Naive thymus-derived CD4-positive, alpha-beta T cell (primary cell): ENCODE measurements at regions of chr10 and their contacts with region 1.

Region 1: DNA sequence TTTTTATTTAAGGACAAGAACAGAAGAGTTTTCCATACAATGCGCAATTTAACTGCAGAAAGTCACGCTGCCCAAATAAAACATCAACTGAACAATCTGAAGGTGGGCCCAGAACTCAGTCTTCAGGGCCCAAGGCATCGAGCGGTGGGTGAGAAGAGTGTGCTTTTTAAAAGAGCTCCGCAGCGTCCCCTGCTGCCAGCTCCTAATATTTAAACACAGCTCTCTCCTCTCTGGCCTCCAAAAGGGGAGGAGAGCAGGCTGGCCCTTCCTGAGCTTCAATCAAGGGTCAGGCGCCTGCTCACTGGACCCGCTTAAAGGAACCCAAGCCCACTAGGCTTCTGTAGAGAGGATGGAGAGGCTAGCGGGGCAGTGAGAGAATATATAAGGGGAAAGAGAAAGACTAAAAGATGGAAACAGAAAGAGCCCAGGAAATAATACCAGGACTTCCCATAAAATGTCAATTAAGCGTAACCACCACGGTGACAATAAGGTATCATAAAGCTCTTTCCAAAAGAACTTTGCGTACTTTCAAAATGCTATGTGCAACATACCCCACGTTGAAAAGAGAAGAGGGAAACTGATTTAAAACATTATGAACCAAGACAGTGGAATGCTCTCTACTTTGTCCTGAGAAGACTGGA is 2.8 kb downstream of the FAM53B start:
- DNase-seq: peak in 8 of 9 donors; percentile 62 to 80 (median 76)
- ATAC-seq: peak; percentile 68
- H3K4me3 ChIP-seq: peak overlapping the region; percentile 61
- H3K4me3 Mint-ChIP-seq: peak overlapping the region; percentile 83 to 98 (median 96)
- H3K27ac ChIP-seq: peak overlapping the region; percentile 57
- H3K27ac Mint-ChIP-seq: peak overlapping the region; percentile 81 to 92 (median 87)
- H3K4me1 ChIP-seq: peaks cover 63 to 68% of the 10 kb centered on the region in 2 donors
- H3K4me1 Mint-ChIP-seq: peaks cover 40 to 78% (median 73%) of the 10 kb centered on the region in 7 donors
- H3K27me3 ChIP-seq: no peaks in the 10 kb centered on the region
- H3K27me3 Mint-ChIP-seq: peaks cover 0 to 27% (median 0%) of the 10 kb centered on the region in 5 donors

Region 2: GRCh38 chr10:124403548-124403947 is 337.9 kb before region 1 on chr10:
- CTCF ChIA-PET with region 1: interaction called, 4 read pairs
- POLR2A ChIA-PET with region 1: no interaction called
- intact Hi-C with region 1: loop called in 1 of 2 experiments (anchors 5 kb)
- DNase-seq: peak in 7 of 9 donors; percentile 49 to 74 (median 67)
- ATAC-seq: peak; percentile 100
- H3K4me3 ChIP-seq: no peak overlapping the region
- H3K4me3 Mint-ChIP-seq: peak overlapping the region in 1 of 10 donors; percentile 38
- H3K27ac ChIP-seq: no peak overlapping the region
- H3K27ac Mint-ChIP-seq: peak overlapping the region; percentile 28 to 95 (median 75)
- H3K4me1 ChIP-seq: peaks cover 0 to 10% of the 10 kb centered on the region in 2 donors
- H3K4me1 Mint-ChIP-seq: peaks cover 8 to 11% (median 10%) of the 10 kb centered on the region in 7 donors
- H3K27me3 ChIP-seq: no peaks in the 10 kb centered on the region
- H3K27me3 Mint-ChIP-seq: no peaks in the 10 kb centered on the region

Region 3: DNA sequence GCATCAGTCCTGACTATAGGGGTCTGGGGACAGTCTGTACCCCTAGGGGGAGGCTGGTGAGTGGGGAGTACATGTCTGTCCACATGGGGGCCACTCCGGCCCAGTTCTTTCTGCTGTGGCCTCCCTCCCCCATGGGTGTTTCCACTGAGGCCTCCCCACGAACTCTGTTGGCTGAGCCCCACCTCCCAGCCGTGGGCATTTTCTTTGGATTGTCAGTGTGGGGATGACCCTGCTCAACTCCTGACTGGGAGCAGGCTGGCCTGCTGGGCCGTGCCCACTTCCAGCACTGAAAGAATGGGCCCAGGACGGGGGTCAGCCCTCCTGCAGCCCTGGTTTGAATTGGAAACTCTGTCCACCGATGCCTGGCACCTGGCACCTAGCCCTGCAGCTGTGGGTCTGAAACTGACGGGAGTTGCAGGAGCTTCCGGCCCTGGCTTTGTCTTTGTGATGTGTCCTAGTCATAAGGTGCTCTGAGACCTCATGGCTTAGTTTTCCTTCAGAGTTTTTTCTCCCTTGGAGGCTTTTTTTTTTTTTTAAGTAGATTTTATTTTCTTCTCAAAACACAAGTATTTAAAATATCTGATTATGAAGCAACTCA is 233.2 kb before region 1 on chr10:
- CTCF ChIA-PET with region 1: no interaction called
- POLR2A ChIA-PET with region 1: no interaction called
- intact Hi-C with region 1: no loop called
- DNase-seq: no peak
- ATAC-seq: no peak
- H3K4me3 ChIP-seq: no peak overlapping the region
- H3K4me3 Mint-ChIP-seq: no peak overlapping the region
- H3K27ac ChIP-seq: no peak overlapping the region
- H3K27ac Mint-ChIP-seq: peak overlapping the region in 1 of 9 donors; percentile 32
- H3K4me1 ChIP-seq: no peaks in the 10 kb centered on the region
- H3K4me1 Mint-ChIP-seq: peaks cover 0 to 8% (median 3%) of the 10 kb centered on the region in 7 donors
- H3K27me3 ChIP-seq: no peaks in the 10 kb centered on the region
- H3K27me3 Mint-ChIP-seq: no peaks in the 10 kb centered on the region

Region 4: GRCh38 chr10:124539935-124540641 is 201.3 kb before region 1 on chr10:
- CTCF ChIA-PET with region 1: interaction called, 110 read pairs
- POLR2A ChIA-PET with region 1: interaction called, 7 read pairs
- intact Hi-C with region 1: loop called (anchors 1 kb)
- DNase-seq: peak; percentile 34 to 70 (median 58)
- ATAC-seq: peak; percentile 83
- H3K4me3 ChIP-seq: no peak overlapping the region
- H3K4me3 Mint-ChIP-seq: peak overlapping the region in 1 of 10 donors; percentile 16
- H3K27ac ChIP-seq: no peak overlapping the region
- H3K27ac Mint-ChIP-seq: peak overlapping the region in 2 of 9 donors; percentile 12 to 28
- H3K4me1 ChIP-seq: peaks cover 0 to 10% of the 10 kb centered on the region in 2 donors
- H3K4me1 Mint-ChIP-seq: peaks cover 0 to 10% (median 7%) of the 10 kb centered on the region in 7 donors
- H3K27me3 ChIP-seq: no peaks in the 10 kb centered on the region
- H3K27me3 Mint-ChIP-seq: no peaks in the 10 kb centered on the region

Region 5: GRCh38 chr10:124632064-124632531 is 109.3 kb before region 1 on chr10:
- CTCF ChIA-PET with region 1: interaction called, 44 read pairs
- POLR2A ChIA-PET with region 1: interaction called, 21 read pairs
- intact Hi-C with region 1: loop called (anchors 1 kb)
- DNase-seq: peak in 2 of 9 donors; percentile 36 to 51
- ATAC-seq: peak; percentile 43
- H3K4me3 ChIP-seq: no peak overlapping the region
- H3K4me3 Mint-ChIP-seq: peak overlapping the region in 1 of 10 donors; percentile 7
- H3K27ac ChIP-seq: no peak overlapping the region
- H3K27ac Mint-ChIP-seq: peak overlapping the region in 2 of 9 donors; percentile 40 to 53
- H3K4me1 ChIP-seq: peaks cover 25 to 47% of the 10 kb centered on the region in 2 donors
- H3K4me1 Mint-ChIP-seq: peaks cover 29 to 78% (median 67%) of the 10 kb centered on the region in 7 donors
- H3K27me3 ChIP-seq: no peaks in the 10 kb centered on the region
- H3K27me3 Mint-ChIP-seq: peaks cover 0 to 8% (median 0%) of the 10 kb centered on the region in 5 donors

Region 6: DNA sequence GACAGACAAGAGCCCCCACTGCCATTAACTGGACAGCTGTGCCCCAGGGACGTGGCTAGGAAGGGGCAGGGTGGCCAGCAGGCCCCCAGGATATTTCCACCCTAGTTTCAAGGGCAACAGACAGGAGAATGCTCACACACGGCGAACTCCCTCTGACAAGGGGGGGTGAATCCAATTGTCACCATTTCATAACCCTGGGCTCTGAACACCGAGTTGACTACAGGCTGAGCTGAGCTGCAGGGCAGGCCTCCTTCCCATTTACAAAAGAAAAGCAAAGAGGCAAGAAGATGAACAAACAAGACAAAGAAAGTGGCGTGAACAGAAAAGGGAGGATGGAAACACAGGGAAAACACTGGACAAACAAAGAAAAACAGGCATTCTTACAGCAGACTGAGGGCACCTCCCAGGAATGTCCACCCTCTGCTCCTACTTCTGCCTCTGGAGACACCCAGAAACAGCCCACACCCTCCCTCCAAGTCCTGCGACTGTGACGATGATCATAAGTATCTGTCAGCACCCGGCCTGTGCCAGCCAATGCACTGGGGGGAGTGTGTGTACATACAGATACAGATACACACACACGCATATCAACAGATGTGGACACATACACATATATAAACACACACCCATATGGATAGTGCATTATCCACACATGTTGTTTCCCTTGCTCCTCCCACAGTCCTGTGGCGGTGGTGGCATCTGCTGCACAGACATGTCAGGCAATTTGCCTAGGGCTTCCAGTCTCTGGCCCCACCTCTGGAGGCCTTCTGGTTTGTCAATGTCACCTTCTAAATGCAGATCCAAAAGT is 63.4 kb before region 1 on chr10:
- CTCF ChIA-PET with region 1: interaction called, 10 read pairs
- POLR2A ChIA-PET with region 1: interaction called, 18 read pairs
- intact Hi-C with region 1: loop called in 1 of 2 experiments (anchors 2 kb)
- DNase-seq: no peak
- ATAC-seq: no peak
- H3K4me3 ChIP-seq: peak overlapping the region; percentile 37
- H3K4me3 Mint-ChIP-seq: peak overlapping the region; percentile 70 to 93 (median 81)
- H3K27ac ChIP-seq: peak overlapping the region; percentile 47
- H3K27ac Mint-ChIP-seq: peak overlapping the region; percentile 79 to 97 (median 91)
- H3K4me1 ChIP-seq: peaks cover 77 to 91% of the 10 kb centered on the region in 2 donors
- H3K4me1 Mint-ChIP-seq: peaks cover 53 to 94% (median 85%) of the 10 kb centered on the region in 7 donors
- H3K27me3 ChIP-seq: no peaks in the 10 kb centered on the region
- H3K27me3 Mint-ChIP-seq: no peaks in the 10 kb centered on the region

Region 7: GRCh38 chr10:124703778-124704427 is 37.5 kb before region 1 on chr10:
- CTCF ChIA-PET with region 1: interaction called, 14 read pairs
- POLR2A ChIA-PET with region 1: interaction called, 15 read pairs
- intact Hi-C with region 1: loop called in 1 of 2 experiments (anchors 1 kb)
- DNase-seq: no peak
- ATAC-seq: no peak
- H3K4me3 ChIP-seq: no peak overlapping the region
- H3K4me3 Mint-ChIP-seq: peak overlapping the region in 7 of 10 donors; percentile 33 to 84 (median 60)
- H3K27ac ChIP-seq: peak overlapping the region; percentile 25
- H3K27ac Mint-ChIP-seq: peak overlapping the region; percentile 56 to 98 (median 92)
- H3K4me1 ChIP-seq: peaks cover 80 to 92% of the 10 kb centered on the region in 2 donors
- H3K4me1 Mint-ChIP-seq: peaks cover 80 to 98% (median 92%) of the 10 kb centered on the region in 7 donors
- H3K27me3 ChIP-seq: no peaks in the 10 kb centered on the region
- H3K27me3 Mint-ChIP-seq: no peaks in the 10 kb centered on the region

Region 8: GRCh38 chr10:124827474-124827873 is 86.1 kb after region 1 on chr10:
- CTCF ChIA-PET with region 1: interaction called, 5 read pairs
- POLR2A ChIA-PET with region 1: no interaction called
- intact Hi-C with region 1: loop called (anchors 5 kb)
- DNase-seq: peak in 5 of 9 donors; percentile 4 to 21 (median 8)
- ATAC-seq: no peak
- H3K4me3 ChIP-seq: no peak overlapping the region
- H3K4me3 Mint-ChIP-seq: no peak overlapping the region
- H3K27ac ChIP-seq: no peak overlapping the region
- H3K27ac Mint-ChIP-seq: no peak overlapping the region
- H3K4me1 ChIP-seq: no peaks in the 10 kb centered on the region
- H3K4me1 Mint-ChIP-seq: no peaks in the 10 kb centered on the region
- H3K27me3 ChIP-seq: no peaks in the 10 kb centered on the region
- H3K27me3 Mint-ChIP-seq: no peaks in the 10 kb centered on the region